Activated CD4-positive, alpha-beta memory T cell treated with anti-CD3 and anti-CD28 coated beads for 36 hours (primary cell): ENCODE measurements at regions of chr4 and their contacts with region 1.

Region 1: DNA sequence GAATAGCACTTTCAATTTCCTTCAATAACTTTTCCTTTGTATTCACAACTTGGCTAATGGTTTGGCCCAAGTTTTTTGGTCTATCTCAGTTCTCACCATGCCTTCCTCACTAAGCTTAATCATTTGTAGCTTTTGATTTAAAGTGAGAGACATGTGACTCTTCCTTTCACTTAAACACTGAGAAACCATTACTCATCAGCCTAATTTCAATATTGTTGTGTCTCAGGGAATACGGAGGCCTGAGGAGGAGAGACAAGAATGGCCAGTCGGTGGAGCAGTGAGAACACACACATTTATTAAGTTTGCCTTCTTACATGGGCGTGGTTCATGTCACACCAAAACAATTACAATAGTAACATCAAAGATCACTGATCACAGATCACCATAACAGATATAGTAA is 56.7 kb downstream of the TSPAN5 start:
- DNase-seq: peak; percentile 54
- H3K4me3 Mint-ChIP-seq: peak overlapping the region; percentile 54
- H3K27ac Mint-ChIP-seq: peak overlapping the region; percentile 82
- H3K4me1 Mint-ChIP-seq: peaks cover 55% of the 10 kb centered on the region
- H3K27me3 Mint-ChIP-seq: no peaks in the 10 kb centered on the region

Region 2: GRCh38 chr4:98482847-98483806 is 118.6 kb before region 1 on chr4:
- CTCF ChIA-PET with region 1: interaction called, 8 read pairs
- POLR2A ChIA-PET with region 1: interaction called, 4 read pairs
- intact Hi-C with region 1: loop called (anchors 1 kb)
- DNase-seq: peak; percentile 69
- H3K4me3 Mint-ChIP-seq: peak overlapping the region; percentile 47
- H3K27ac Mint-ChIP-seq: peak overlapping the region; percentile 96
- H3K4me1 Mint-ChIP-seq: peaks cover 74% of the 10 kb centered on the region
- H3K27me3 Mint-ChIP-seq: no peaks in the 10 kb centered on the region

Region 3: GRCh38 chr4:98522636-98523395 is 78.9 kb before region 1 on chr4:
- CTCF ChIA-PET with region 1: no interaction called
- POLR2A ChIA-PET with region 1: interaction called, 4 read pairs
- intact Hi-C with region 1: loop called (anchors 2 kb)
- DNase-seq: no peak
- H3K4me3 Mint-ChIP-seq: no peak overlapping the region
- H3K27ac Mint-ChIP-seq: no peak overlapping the region
- H3K4me1 Mint-ChIP-seq: peaks cover 67% of the 10 kb centered on the region
- H3K27me3 Mint-ChIP-seq: no peaks in the 10 kb centered on the region

Region 4: GRCh38 chr4:98639523-98639922 is 37.8 kb after region 1 on chr4:
- CTCF ChIA-PET with region 1: interaction called, 3 read pairs
- POLR2A ChIA-PET with region 1: interaction called, 3 read pairs
- intact Hi-C with region 1: loop called (anchors 1 kb)
- DNase-seq: no peak
- H3K4me3 Mint-ChIP-seq: peak overlapping the region; percentile 66
- H3K27ac Mint-ChIP-seq: peak overlapping the region; percentile 74
- H3K4me1 Mint-ChIP-seq: peaks cover 56% of the 10 kb centered on the region
- H3K27me3 Mint-ChIP-seq: no peaks in the 10 kb centered on the region

Region 5: DNA sequence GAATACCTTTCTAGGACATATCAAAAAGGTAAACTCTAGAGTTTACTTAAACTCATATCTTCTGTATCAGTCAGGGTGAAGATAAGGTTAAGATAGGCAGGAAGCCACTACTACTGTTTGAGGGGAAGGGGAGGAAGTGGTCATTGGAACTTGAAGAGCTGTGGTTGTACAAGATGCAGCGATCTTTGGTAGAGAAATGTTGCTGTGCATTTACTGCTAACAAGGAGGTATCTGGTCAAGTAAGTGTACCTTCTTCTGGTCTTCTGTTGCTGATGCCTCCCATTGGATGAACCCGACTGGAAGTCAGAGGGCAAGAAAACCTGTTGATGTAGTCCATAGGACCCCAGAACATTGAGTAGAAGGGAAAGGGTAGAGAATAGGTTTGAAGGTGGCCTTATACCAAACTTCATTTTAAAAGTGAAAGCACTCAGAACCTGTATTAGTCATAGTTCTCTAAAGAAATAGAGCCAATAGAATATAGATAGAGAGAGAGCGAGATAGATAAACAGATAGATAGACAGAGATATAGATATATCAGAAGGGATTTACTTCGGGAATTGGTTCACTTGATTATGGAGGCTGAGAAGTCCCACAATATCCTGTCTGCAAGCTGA is 104.6 kb after region 1 on chr4:
- CTCF ChIA-PET with region 1: no interaction called
- POLR2A ChIA-PET with region 1: no interaction called
- intact Hi-C with region 1: loop called (anchors 5 kb)
- DNase-seq: peak; percentile 34
- H3K4me3 Mint-ChIP-seq: peak overlapping the region; percentile 51
- H3K27ac Mint-ChIP-seq: peak overlapping the region; percentile 69
- H3K4me1 Mint-ChIP-seq: peaks cover 26% of the 10 kb centered on the region
- H3K27me3 Mint-ChIP-seq: no peaks in the 10 kb centered on the region

Region 6: GRCh38 chr4:98864560-98864959 is 262.9 kb after region 1 on chr4:
- CTCF ChIA-PET with region 1: no interaction called
- POLR2A ChIA-PET with region 1: no interaction called
- intact Hi-C with region 1: loop called (anchors 1 kb)
- DNase-seq: peak; percentile 79
- H3K4me3 Mint-ChIP-seq: no peak overlapping the region
- H3K27ac Mint-ChIP-seq: peak overlapping the region; percentile 42
- H3K4me1 Mint-ChIP-seq: peaks cover 13% of the 10 kb centered on the region
- H3K27me3 Mint-ChIP-seq: no peaks in the 10 kb centered on the region